PC-3 (cell line): ENCODE measurements at regions of chr19 and their contacts with region 1.

Region 1: GRCh38 chr19:11558881-11559828 is at the start of gene ELOF1:
- DNase-seq: peak; percentile 100
- ATAC-seq: peak; percentile 97
- H3K4me3 ChIP-seq: peak within 1 kb of the TSS; percentile 80
- H3K27ac ChIP-seq: peak within 1 kb of the TSS; percentile 6; the same call in 1 of the 2 replicates
- H3K4me1 ChIP-seq: peaks cover 14% of the 10 kb centered on the region; the same call in 1 of the 2 replicates
- H3K27me3 ChIP-seq: no peaks in the 10 kb centered on the region
- CTCF ChIP-seq: peak; percentile 43; the same call in 1 of the 2 replicates
- total RNA-seq, gene ELOF1: 91.9 and 105 TPM in 2 replicates

Region 2: GRCh38 chr19:11279496-11280236 is 279.5 kb before region 1 on chr19:
- CTCF ChIA-PET with region 1: no interaction called
- POLR2A ChIA-PET with region 1: interaction called, 14 read pairs
- intact Hi-C with region 1: no loop called
- DNase-seq: no peak
- ATAC-seq: no peak
- H3K4me3 ChIP-seq: no peak overlapping the region
- H3K27ac ChIP-seq: no peak overlapping the region
- H3K4me1 ChIP-seq: no peaks in the 10 kb centered on the region
- H3K27me3 ChIP-seq: no peaks in the 10 kb centered on the region
- CTCF ChIP-seq: no peak

Region 3: GRCh38 chr19:11505032-11505503 is 54.1 kb before region 1 on chr19:
- CTCF ChIA-PET with region 1: no interaction called
- POLR2A ChIA-PET with region 1: no interaction called
- intact Hi-C with region 1: loop called (anchors 1 kb)
- DNase-seq: peak; percentile 99
- ATAC-seq: peak; percentile 96
- H3K4me3 ChIP-seq: peak overlapping the region; percentile 84
- H3K27ac ChIP-seq: peak overlapping the region; percentile 65
- H3K4me1 ChIP-seq: peaks cover 15% of the 10 kb centered on the region
- H3K27me3 ChIP-seq: no peaks in the 10 kb centered on the region
- CTCF ChIP-seq: no peak

Region 4: DNA sequence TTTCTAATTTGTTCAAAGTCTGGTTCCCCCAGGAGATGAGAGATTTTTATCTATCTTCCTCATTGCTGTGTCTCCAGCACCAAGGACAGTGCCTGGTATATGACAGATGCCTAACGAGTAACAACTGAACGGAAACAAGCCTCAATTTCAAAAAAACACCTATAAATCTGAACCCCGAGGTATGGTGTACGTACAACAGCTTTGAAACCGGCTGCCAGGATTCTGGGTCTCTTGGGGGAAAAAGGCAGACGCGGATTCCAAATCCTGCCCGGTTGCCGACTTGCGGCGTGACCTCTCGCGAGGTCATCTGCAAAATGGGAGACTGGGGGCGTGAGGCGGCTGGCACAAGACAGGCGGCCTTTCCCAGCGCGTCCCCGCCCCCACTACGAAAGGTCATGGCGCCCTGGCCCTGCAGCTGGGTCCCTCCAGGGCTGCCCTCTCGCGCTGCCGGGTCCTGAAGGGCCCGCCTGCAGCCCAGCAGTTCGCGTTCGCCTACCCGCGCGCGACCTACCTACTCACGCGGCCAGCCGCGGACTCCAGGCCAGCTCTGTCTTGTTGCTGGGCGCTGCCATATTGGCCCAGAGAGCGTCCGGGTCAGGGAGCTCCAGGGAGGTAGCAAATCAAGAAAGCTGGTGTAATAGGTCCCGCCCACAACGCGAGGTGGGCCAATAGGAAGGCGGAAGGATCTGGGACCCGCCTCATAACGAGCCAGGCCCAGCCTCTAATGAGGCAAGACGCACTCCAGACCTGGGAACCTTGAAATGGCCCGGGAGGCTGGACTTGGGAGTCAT is 30.4 kb before region 1 on chr19 and contains the start of gene ECSIT:
- CTCF ChIA-PET with region 1: interaction called, 7 read pairs
- POLR2A ChIA-PET with region 1: interaction called, 21 read pairs
- intact Hi-C with region 1: loop called (anchors 2 kb)
- DNase-seq: peak; percentile 99
- ATAC-seq: peak; percentile 96
- H3K4me3 ChIP-seq: peak within 1 kb of the TSS; percentile 90
- H3K27ac ChIP-seq: peak within 1 kb of the TSS; percentile 81
- H3K4me1 ChIP-seq: peaks cover 25% of the 10 kb centered on the region
- H3K27me3 ChIP-seq: no peaks in the 10 kb centered on the region
- CTCF ChIP-seq: no peak
- total RNA-seq, gene ECSIT: 126 and 156 TPM in 2 replicates

Region 5: GRCh38 chr19:11587302-11587974 is 28.3 kb after region 1 on chr19:
- CTCF ChIA-PET with region 1: interaction called, 7 read pairs
- POLR2A ChIA-PET with region 1: no interaction called
- intact Hi-C with region 1: loop called (anchors 2 kb)
- DNase-seq: peak; percentile 85
- ATAC-seq: peak; percentile 92
- H3K4me3 ChIP-seq: peak overlapping the region; percentile 62
- H3K27ac ChIP-seq: no peak overlapping the region
- H3K4me1 ChIP-seq: 0 out of 2 replicates have a peak, but pooled peaks cover 5% of the 10 kb centered on the region
- H3K27me3 ChIP-seq: no peaks in the 10 kb centered on the region
- CTCF ChIP-seq: peak; percentile 93